IMR-90 (cell line): ENCODE measurements at regions of chr12 and their contacts with region 1.

Region 1: DNA sequence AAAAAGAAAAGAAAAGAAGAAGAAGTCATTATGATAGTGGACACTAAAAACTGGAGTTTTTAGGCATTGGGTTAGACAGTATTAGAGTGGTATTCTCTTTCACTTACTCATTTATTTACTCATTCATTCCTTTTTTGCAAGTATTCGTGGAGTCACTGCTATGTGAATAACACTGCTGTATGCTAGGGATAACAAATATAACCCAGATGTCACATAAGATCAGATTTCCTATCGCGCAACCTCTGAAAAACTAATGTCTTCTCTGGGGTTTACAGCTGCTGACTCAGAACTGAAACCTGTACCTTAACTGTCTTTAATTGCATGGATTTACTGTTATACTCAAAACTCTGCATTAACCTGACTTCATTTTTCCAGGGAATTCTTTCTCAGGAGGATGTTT is 353.7 kb downstream of the LRIG3 start:
- DNase-seq: peak; percentile 98
- ATAC-seq: peak; percentile 87
- H3K4me3 ChIP-seq: no peak overlapping the region
- H3K27ac ChIP-seq: peak overlapping the region; percentile 98
- H3K4me1 ChIP-seq: peaks cover 16% of the 10 kb centered on the region
- H3K27me3 ChIP-seq: no peaks in the 10 kb centered on the region
- CTCF ChIP-seq: no peak
- POLR2A ChIP-seq: no peak
- RAD21 ChIP-seq: no peak

Region 2: GRCh38 chr12:58750484-58750883 is 183.9 kb after region 1 on chr12:
- CTCF ChIA-PET with region 1: no interaction called
- POLR2A ChIA-PET with region 1: no interaction called
- dilution Hi-C with region 1: no loop called
- in situ Hi-C with region 1: loop called (anchors 10 kb)
- intact Hi-C with region 1: no loop called
- DNase-seq: peak; percentile 98
- ATAC-seq: peak; percentile 88
- H3K4me3 ChIP-seq: no peak overlapping the region
- H3K27ac ChIP-seq: no peak overlapping the region
- H3K4me1 ChIP-seq: no peaks in the 10 kb centered on the region; the same call in 1 of the 2 replicates
- H3K27me3 ChIP-seq: no peaks in the 10 kb centered on the region
- CTCF ChIP-seq: no peak
- POLR2A ChIP-seq: no peak
- RAD21 ChIP-seq: peak; percentile 9; the same call in 1 of the 2 replicates

Region 3: GRCh38 chr12:58765653-58766512 is 199.3 kb after region 1 on chr12:
- CTCF ChIA-PET with region 1: no interaction called
- POLR2A ChIA-PET with region 1: no interaction called
- dilution Hi-C with region 1: no loop called
- in situ Hi-C with region 1: no loop called
- intact Hi-C with region 1: loop called (anchors 5 kb)
- DNase-seq: peak; percentile 59
- ATAC-seq: peak; percentile 25
- H3K4me3 ChIP-seq: no peak overlapping the region
- H3K27ac ChIP-seq: peak overlapping the region; percentile 87; the same call in 1 of the 2 replicates
- H3K4me1 ChIP-seq: peaks cover 9% of the 10 kb centered on the region
- H3K27me3 ChIP-seq: no peaks in the 10 kb centered on the region
- CTCF ChIP-seq: no peak
- POLR2A ChIP-seq: no peak
- RAD21 ChIP-seq: no peak

Region 4: DNA sequence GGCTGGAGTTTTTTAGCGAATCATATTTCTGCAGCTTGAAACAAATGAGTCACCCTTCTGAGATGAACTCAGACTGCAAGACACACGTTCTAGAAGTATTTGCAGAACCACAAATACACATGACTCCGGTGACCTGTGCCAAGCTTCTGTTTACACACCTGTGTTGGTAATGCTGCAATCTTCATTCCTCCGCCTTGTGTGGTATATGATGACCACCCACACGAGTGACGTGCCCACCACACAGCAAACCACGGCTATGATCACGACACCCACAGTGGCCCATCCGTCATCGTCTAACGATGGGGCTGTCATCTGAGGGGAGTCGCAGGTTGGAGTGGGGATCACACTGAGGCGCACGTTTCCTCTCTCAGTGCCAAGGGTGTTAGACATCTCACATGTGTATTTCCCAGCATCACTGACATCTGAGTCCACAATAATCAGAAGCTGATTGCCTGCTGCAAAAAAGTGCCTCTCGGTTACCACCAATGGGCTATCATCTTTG is 310.7 kb after region 1 on chr12:
- CTCF ChIA-PET with region 1: no interaction called
- POLR2A ChIA-PET with region 1: no interaction called
- dilution Hi-C with region 1: no loop called
- in situ Hi-C with region 1: no loop called
- intact Hi-C with region 1: loop called (anchors 2 kb)
- DNase-seq: peak; percentile 100
- ATAC-seq: peak; percentile 90
- H3K4me3 ChIP-seq: no peak overlapping the region
- H3K27ac ChIP-seq: peak overlapping the region; percentile 0; the same call in 1 of the 2 replicates
- H3K4me1 ChIP-seq: peaks cover 3% of the 10 kb centered on the region; the same call in 1 of the 2 replicates
- H3K27me3 ChIP-seq: no peaks in the 10 kb centered on the region
- CTCF ChIP-seq: no peak
- POLR2A ChIP-seq: no peak
- RAD21 ChIP-seq: no peak